ENCODE measurements at regions of chr2 and their contacts with region 1.

Region 1: GRCh38 chr2:105775809-105776559 is 31.3 kb downstream of the NCK2 start:
- DNase-seq: no peak
- ATAC-seq: peak; percentile 63
- H3K4me3 Mint-ChIP-seq: peak overlapping the region; percentile 80
- H3K27ac Mint-ChIP-seq: peak overlapping the region; percentile 72
- H3K4me1 Mint-ChIP-seq: peaks cover 71% of the 10 kb centered on the region
- H3K27me3 Mint-ChIP-seq: no peaks in the 10 kb centered on the region

Region 2: DNA sequence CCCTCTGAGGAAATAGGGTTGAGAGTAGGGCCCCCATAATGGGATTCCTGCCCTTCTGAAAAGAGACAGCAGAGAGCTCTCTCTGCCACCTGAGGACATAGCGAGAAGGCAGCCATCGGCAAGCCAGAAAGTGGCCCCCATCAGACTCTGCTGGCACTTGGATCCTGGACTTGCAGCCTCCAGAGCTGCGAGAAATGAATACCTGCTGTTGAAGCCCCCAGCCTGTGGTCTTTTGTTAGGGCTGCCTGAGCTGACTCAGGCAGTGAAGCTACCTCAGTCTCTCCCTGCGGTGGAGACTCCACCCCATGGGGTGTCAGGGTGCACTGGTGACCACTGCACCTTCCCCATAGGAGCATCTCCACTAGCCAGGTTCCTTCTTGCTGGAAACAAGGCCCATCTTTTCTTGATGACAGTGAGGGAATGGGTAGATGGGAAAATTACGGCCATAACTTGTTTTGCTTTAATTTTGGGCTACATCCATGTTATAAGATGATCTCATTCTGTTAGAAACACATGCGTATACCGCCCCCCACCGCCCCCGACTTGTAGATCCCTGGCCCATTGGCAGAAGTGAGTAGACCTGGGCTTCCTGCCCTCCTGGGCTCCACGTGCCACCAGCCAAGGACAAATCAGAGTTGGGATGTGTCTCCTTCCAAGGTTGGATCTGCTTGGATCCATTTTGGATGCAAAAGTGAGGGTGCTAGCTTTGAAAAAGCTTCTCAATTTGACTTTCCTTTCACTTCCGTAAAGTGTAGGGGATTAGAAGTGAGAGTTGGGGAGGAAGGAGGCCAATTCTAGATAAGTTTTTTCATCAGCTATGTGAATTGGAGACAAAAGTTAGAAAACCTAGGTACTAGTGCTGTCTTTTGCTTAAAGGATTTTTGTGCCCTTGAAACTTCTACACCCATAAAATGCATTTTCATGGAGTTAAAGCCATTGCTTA is 11.7 kb after region 1 on chr2:
- POLR2A ChIA-PET with region 1: interaction called, 20 read pairs
- DNase-seq: peak; percentile 60
- ATAC-seq: no peak
- H3K4me3 Mint-ChIP-seq: peak overlapping the region; percentile 60
- H3K27ac Mint-ChIP-seq: peak overlapping the region; percentile 90
- H3K4me1 Mint-ChIP-seq: peaks cover 82% of the 10 kb centered on the region
- H3K27me3 Mint-ChIP-seq: no peaks in the 10 kb centered on the region

Region 3: DNA sequence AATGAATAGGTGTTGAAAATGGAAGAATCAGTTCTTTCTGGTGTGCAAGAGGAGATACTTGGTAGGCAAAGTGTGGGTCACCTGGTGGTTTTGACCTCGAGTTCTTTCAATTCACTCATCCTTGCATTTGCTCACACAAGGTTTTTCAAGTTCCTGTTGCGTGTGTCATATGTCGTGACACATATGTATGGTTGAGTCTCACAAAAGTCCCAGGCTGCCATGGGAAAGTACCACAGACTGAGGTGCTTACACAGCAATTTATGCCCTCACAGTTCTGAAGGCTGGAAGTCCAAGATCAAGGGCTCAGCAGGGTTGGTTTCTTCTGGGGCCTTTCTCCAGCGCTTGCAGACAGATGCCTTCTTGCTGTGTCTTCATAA is 33.1 kb after region 1 on chr2:
- POLR2A ChIA-PET with region 1: no interaction called
- DNase-seq: no peak
- ATAC-seq: no peak
- H3K4me3 Mint-ChIP-seq: no peak overlapping the region
- H3K27ac Mint-ChIP-seq: no peak overlapping the region
- H3K4me1 Mint-ChIP-seq: peaks cover 53% of the 10 kb centered on the region
- H3K27me3 Mint-ChIP-seq: no peaks in the 10 kb centered on the region